ENCODE measurements at regions of chr11 and their contacts with region 1.

Region 1: DNA sequence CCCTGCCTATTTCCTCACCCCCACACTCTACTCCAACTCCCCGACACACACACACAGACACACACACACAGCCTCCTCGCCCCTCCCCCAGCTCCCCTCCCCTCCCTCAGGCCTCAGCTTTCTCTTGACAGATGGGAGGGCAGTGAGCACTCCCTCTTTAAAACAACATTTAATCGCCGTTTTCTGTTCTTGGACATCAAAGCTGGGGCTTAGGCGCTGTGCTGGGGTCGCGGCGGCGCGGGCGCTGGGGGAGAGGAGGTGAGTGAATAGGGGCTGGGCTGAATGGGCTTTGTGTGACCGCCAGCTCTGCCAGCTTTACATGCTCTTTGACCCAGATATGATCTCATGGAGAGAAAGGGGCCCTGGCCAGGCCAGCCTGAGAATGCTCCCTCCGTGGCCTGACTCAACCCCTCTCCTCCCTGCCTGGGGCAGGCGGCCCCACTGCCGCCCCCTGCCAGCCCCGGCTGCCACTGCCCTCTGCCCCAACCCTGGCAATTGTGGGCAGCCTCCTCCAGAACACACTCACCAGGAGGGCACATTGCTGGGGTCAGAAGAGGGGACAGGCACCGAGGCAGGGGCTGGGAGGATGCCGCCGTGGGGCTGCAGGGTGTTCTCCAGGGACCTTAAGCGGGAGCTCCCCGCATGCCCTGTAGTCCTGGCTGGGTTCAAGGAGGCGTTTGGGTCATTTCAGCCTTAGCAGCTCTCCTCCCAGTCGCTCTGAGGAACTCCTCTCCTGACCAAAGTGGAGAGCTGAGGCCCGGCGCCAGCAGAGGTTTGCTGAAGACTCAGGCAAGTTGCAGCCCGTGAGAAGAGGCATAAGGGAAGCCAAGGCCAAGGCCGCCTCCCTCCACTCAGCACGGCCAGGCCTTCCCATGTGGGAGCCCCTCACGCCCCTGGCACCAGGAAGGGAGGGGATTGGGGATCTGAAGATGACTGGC is 38.3 kb upstream of the NNMT start:
- DNase-seq: no peak
- H3K4me3 ChIP-seq: no peak overlapping the region
- H3K27ac ChIP-seq: peak overlapping the region; percentile 36 to 76 (median 72)
- H3K4me1 ChIP-seq: peaks cover 0 to 44% (median 26%) of the 10 kb centered on the region in 4 donors
- H3K27me3 ChIP-seq: no peaks in the 10 kb centered on the region
- CTCF ChIP-seq: no peak
- EP300 ChIP-seq: no peak
- POLR2A ChIP-seq: no peak

Region 2: GRCh38 chr11:113906038-113906437 is 351.9 kb before region 1 on chr11:
- in situ Hi-C with region 1: loop called in 1 of 4 experiments (anchors 10 kb)
- intact Hi-C with region 1: no loop called
- DNase-seq: peak; percentile 72
- H3K4me3 ChIP-seq: no peak overlapping the region
- H3K27ac ChIP-seq: peak overlapping the region in 1 of 4 donors; percentile 23
- H3K4me1 ChIP-seq: peaks cover 0 to 17% (median 8%) of the 10 kb centered on the region in 4 donors
- H3K27me3 ChIP-seq: peaks cover 9% of the 10 kb centered on the region
- CTCF ChIP-seq: peak; percentile 11 to 52 (median 44)
- EP300 ChIP-seq: no peak
- POLR2A ChIP-seq: no peak

Region 3: GRCh38 chr11:114059278-114059983 is 198.5 kb before region 1 on chr11 and contains the start of gene ZBTB16:
- in situ Hi-C with region 1: no loop called
- intact Hi-C with region 1: loop called (anchors 5 kb)
- DNase-seq: peak; percentile 88
- H3K4me3 ChIP-seq: peak within 1 kb of the TSS; percentile 71 to 96 (median 86)
- H3K27ac ChIP-seq: peak within 1 kb of the TSS; percentile 92 to 97 (median 96)
- H3K4me1 ChIP-seq: peaks cover 6 to 37% (median 31%) of the 10 kb centered on the region in 4 donors
- H3K27me3 ChIP-seq: peaks cover 12% of the 10 kb centered on the region
- CTCF ChIP-seq: peak in 3 of 5 experiments; percentile 19 to 38 (median 25)
- EP300 ChIP-seq: peak; percentile 38
- POLR2A ChIP-seq: peak; percentile 85
- total RNA-seq, gene ZBTB16: 108 to 271 (median 155) TPM

Measured in transverse colon (tissue), 4 donors.